Activated B cell treated with CpG ODN at 0.5 μM for 24 hours (primary cell): ENCODE measurements at regions of chr19 and their contacts with region 1.

Region 1: DNA sequence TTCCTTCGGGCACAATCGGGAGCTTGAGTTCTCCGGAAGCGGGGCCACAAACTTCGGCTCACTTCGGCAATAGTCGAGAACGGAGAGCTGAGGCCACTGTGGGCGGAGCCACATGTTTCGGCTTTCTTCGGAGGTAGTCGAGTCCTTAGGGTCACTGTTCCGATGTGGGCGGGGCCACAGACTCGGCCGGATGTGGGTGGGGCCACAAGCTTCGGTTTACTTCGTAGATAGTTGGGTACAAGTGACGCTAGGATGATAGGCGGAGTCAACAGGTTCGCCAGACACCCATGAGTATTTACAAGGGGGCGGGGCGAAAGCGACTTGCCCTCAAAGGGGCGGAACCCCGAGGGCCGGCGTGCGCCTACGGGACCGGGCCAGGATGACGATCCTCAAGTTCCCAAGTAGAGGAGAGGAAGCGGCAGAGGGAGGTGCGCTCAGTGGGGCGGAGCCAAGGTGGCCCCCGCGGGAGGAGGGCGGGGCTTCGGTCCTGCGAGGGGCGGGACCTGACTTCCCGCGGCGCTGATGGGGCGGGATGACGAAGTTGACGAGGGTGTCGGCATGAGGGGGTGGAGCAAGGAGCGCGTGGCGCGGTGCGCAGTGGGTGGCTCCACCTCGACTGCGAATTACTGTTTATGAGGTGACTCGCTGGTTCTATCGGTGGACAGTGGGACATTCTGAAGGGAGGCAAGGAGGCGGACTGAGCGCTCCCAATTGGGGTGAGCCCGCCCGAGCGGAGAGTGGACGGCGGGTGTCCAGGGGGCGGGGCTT is 539 bp upstream of the MBOAT7 start:
- DNase-seq: peak; percentile 99
- ATAC-seq: peak; percentile 57
- H3K4me3 Mint-ChIP-seq: peak overlapping the region; percentile 90
- H3K27ac Mint-ChIP-seq: peak overlapping the region; percentile 98
- H3K4me1 Mint-ChIP-seq: peaks cover 35% of the 10 kb centered on the region
- H3K27me3 Mint-ChIP-seq: no peaks in the 10 kb centered on the region
- CTCF ChIP-seq: no peak

Region 2: DNA sequence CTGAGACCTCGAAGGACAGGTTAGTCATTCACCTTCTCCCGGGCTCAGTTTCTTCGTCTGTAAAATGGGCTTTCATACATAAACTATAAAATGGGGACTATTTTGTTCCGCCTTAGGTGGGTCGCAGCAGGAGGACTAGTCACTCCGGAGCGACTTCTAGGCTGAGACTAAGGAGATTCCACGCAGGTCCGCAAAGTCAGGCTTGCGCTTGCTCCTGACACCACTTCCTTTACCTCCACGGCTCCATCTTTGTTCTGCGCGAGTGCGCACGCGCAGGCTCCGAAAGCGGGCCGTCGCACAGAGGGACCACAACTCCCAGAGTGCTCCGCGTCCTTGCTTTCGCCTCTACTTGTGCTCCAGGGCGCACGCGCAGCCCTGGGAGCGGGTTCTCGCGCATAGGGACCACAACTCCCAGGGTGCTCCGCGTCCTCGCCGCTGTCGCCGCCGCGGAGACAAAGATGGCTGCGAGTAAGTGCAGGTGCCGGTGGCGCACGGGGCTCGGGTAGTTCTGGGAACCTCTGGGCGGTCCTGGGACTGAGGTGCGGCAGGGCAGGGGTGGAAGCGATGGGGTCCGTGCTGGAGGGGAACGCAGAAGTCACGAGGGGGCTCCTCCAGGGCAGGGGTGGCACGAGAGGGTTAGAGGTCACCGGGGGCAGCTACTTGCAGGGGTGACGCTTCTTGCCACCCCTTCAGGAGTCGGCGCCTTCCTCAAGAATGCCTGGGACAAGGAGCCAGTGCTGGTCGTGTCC is 87.3 kb before region 1 on chr19 and contains the start of gene NDUFA3:
- CTCF ChIA-PET with region 1: no interaction called
- POLR2A ChIA-PET with region 1: interaction called, 7 read pairs
- intact Hi-C with region 1: loop called (anchors 1 kb)
- DNase-seq: peak; percentile 93
- ATAC-seq: peak; percentile 97
- H3K4me3 Mint-ChIP-seq: peak within 1 kb of the TSS; percentile 99
- H3K27ac Mint-ChIP-seq: peak within 1 kb of the TSS; percentile 93
- H3K4me1 Mint-ChIP-seq: peaks cover 15% of the 10 kb centered on the region
- H3K27me3 Mint-ChIP-seq: no peaks in the 10 kb centered on the region
- CTCF ChIP-seq: no peak
- total RNA-seq, gene NDUFA3: 94.7 and 96.1 TPM in 2 replicates

Region 3: GRCh38 chr19:54137086-54137921 is 52.6 kb before region 1 on chr19 and contains the start of gene CNOT3:
- CTCF ChIA-PET with region 1: interaction called, 8 read pairs
- POLR2A ChIA-PET with region 1: interaction called, 68 read pairs
- intact Hi-C with region 1: loop called (anchors 1 kb)
- DNase-seq: peak; percentile 92
- ATAC-seq: peak; percentile 80
- H3K4me3 Mint-ChIP-seq: peak within 1 kb of the TSS; percentile 85
- H3K27ac Mint-ChIP-seq: peak within 1 kb of the TSS; percentile 90
- H3K4me1 Mint-ChIP-seq: peaks cover 51% of the 10 kb centered on the region
- H3K27me3 Mint-ChIP-seq: no peaks in the 10 kb centered on the region
- CTCF ChIP-seq: no peak
- total RNA-seq, gene CNOT3: 53.2 and 64.6 TPM in 2 replicates

Region 4: DNA sequence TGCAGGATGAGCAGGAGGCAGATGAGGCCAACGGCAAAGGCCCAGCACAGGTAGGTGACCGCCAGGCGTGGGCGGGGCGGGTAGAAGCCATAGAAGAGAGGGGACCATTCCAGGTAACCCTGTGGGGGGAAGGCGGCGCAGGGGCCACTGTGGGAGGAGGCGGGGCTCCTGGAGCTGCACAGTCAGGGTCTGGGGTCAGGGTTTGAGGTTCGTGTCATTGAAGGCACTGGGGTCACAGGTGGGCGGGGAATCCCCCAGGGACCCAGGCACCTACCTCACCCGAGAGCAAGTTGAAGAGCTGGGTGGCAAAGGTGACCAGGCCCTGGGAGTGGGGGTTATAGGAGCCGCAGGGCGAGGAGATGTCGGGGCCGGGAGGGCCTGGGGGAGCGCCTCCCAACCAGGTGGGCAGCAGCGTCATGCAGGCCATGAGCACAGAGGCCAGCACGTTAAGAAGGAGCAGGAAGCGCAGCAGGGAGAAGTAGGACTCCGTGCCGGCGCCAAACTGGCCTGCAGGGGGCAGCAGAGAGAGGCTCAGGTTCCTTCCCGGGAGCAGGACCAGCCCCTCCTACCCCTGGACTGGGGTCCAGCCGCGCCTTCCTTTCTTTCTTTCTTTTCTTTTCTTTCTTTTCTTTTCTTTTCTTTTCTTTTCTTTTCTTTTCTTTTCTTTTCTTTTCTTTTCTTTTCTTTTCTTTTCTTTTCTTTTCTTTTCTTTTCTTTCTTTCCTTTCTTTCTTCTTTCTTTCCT is 21.6 kb before region 1 on chr19:
- CTCF ChIA-PET with region 1: interaction called, 13 read pairs
- POLR2A ChIA-PET with region 1: interaction called, 4 read pairs
- intact Hi-C with region 1: no loop called
- DNase-seq: peak; percentile 85
- ATAC-seq: peak; percentile 89
- H3K4me3 Mint-ChIP-seq: no peak overlapping the region
- H3K27ac Mint-ChIP-seq: no peak overlapping the region
- H3K4me1 Mint-ChIP-seq: peaks cover 24% of the 10 kb centered on the region
- H3K27me3 Mint-ChIP-seq: peaks cover 17% of the 10 kb centered on the region
- CTCF ChIP-seq: peak; percentile 71

Region 5: GRCh38 chr19:54209811-54210494 is 20.0 kb after region 1 on chr19:
- CTCF ChIA-PET with region 1: interaction called, 3 read pairs
- POLR2A ChIA-PET with region 1: interaction called, 69 read pairs
- intact Hi-C with region 1: no loop called
- DNase-seq: no peak
- ATAC-seq: no peak
- H3K4me3 Mint-ChIP-seq: peak overlapping the region; percentile 6
- H3K27ac Mint-ChIP-seq: peak overlapping the region; percentile 10
- H3K4me1 Mint-ChIP-seq: peaks cover 60% of the 10 kb centered on the region
- H3K27me3 Mint-ChIP-seq: no peaks in the 10 kb centered on the region
- CTCF ChIP-seq: no peak

Region 6: GRCh38 chr19:54390942-54391577 is 201.1 kb after region 1 on chr19:
- CTCF ChIA-PET with region 1: interaction called, 12 read pairs
- POLR2A ChIA-PET with region 1: interaction called, 4 read pairs
- intact Hi-C with region 1: no loop called
- DNase-seq: peak; percentile 41
- ATAC-seq: peak; percentile 39
- H3K4me3 Mint-ChIP-seq: peak overlapping the region; percentile 70
- H3K27ac Mint-ChIP-seq: peak overlapping the region; percentile 75
- H3K4me1 Mint-ChIP-seq: peaks cover 50% of the 10 kb centered on the region
- H3K27me3 Mint-ChIP-seq: no peaks in the 10 kb centered on the region
- CTCF ChIP-seq: peak; percentile 81

Region 7: GRCh38 chr19:54463531-54464043 is 273.7 kb after region 1 on chr19 and contains the start of gene LENG9:
- CTCF ChIA-PET with region 1: no interaction called
- POLR2A ChIA-PET with region 1: interaction called, 3 read pairs
- intact Hi-C with region 1: loop called (anchors 1 kb)
- DNase-seq: peak; percentile 85
- ATAC-seq: peak; percentile 61
- H3K4me3 Mint-ChIP-seq: peak within 1 kb of the TSS; percentile 82
- H3K27ac Mint-ChIP-seq: peak within 1 kb of the TSS; percentile 90
- H3K4me1 Mint-ChIP-seq: peaks cover 28% of the 10 kb centered on the region
- H3K27me3 Mint-ChIP-seq: no peaks in the 10 kb centered on the region
- CTCF ChIP-seq: no peak
- total RNA-seq, gene LENG9: 6.3 and 8.5 TPM in 2 replicates